ENCODE measurements at regions of chr7 and their contacts with region 1.

Region 1: DNA sequence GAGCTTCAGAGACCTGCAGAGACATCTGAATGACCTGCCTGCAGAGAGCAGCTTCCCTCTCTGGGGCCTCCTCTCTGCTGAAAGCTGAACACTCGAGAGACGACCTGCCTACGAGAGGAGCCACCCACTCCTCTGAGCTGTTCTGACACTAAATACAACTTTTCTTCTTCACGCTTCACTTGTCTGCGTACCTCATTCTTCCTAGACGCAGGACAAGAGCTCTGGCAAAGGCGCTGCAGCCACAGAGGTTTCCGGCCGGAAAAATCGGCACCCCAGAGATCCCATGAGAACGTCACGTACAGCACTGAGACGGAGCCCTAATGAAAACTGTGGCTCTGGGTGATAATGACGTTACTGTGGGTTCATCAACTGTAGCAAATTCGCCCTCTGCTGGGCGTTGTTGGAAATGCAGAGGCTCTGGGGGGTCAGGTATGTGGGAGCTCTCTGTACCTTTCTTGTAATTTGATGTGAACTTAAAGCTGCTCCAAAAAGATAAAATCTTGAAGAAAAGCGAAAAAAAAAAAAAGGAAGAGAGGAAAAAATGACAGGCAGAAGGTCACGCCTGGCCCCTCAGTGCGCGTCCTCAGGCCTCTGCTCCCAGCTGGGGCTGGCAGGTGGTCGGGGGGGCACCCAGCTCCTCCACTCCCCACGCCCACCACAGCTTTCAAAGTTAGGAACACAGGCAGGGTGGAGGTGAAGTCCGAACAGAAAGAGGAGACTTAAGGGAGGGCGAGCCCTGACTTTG is 120.7 kb downstream of the DYNC2I1 start:
- DNase-seq: peak; percentile 76
- H3K4me3 ChIP-seq: peak overlapping the region; percentile 39
- H3K27ac ChIP-seq: no peak overlapping the region
- H3K4me1 ChIP-seq: no peaks in the 10 kb centered on the region
- CTCF ChIP-seq: peak; percentile 90

Region 2: DNA sequence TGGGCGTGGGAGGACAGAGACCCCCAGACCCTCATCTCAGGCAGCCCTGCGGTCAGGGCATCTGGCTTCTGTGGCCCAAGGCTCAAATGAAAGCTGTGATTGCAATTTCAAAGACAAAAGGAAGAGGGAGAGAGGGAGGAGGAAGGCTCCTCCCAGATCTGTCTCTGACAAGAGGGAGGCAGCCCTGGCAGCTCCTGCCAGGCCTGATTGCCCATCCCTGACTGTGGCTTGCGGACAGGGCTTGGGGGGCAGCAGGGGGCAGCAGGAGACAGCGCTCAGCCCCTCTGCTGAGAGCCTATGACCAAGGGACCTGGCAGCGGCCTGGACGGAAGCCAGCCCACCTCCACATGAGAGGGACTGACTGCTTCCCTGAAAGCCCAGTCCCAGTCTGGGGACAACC is 481.2 kb before region 1 on chr7:
- CTCF ChIA-PET with region 1: no interaction called
- POLR2A ChIA-PET with region 1: interaction called, 4 read pairs
- intact Hi-C with region 1: loop called (anchors 2 kb)
- DNase-seq: peak; percentile 19
- H3K4me3 ChIP-seq: no peak overlapping the region
- H3K27ac ChIP-seq: no peak overlapping the region
- H3K4me1 ChIP-seq: no peaks in the 10 kb centered on the region
- CTCF ChIP-seq: no peak

Region 3: DNA sequence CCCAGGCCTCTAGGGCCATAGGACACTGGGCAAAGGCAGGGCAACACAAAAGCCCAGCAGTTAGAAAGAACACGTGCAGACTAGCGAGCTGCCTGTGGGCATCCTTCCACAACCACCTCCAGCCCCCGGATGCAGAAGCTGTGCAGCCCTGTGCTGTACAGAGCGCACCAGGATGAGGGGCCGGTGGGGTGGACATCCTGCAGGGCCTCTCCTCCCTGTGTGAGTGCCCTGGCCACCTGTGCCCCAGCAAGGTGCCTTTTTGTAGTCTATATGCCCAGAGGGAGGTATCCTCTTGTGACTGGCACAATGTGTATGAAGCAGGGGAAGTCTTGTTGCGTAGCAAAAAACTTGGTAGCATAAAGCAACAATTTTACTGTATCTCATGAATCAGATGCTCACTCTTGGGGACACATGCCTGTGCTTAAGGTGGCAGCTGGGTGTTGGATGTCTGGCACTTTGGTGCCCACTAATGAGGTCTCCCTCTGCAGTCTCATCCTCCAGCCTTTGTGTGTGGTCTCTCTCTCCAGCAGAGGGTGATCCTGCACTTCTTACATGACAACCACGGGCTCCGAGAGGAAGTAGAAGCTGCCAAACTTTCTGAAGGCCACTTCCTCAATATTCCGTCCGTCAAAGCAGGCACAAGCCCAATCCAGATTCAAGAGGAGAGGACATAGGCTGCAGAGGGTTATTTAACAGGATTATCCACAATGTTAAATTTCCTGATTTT is 281.1 kb before region 1 on chr7:
- CTCF ChIA-PET with region 1: no interaction called
- POLR2A ChIA-PET with region 1: no interaction called
- intact Hi-C with region 1: loop called (anchors 10 kb)
- DNase-seq: no peak
- H3K4me3 ChIP-seq: no peak overlapping the region
- H3K27ac ChIP-seq: no peak overlapping the region
- H3K4me1 ChIP-seq: no peaks in the 10 kb centered on the region
- CTCF ChIP-seq: peak; percentile 30; the same call in 1 of the 2 replicates

Measured in OCI-LY7 (cell line).